Left ventricle myocardium superior (tissue), 1 donor: ENCODE measurements at regions of chr12 and their contacts with region 1.

Region 1: GRCh38 chr12:52879394-52880351 is 25.2 kb downstream of the KRT8 start:
- DNase-seq: peak; percentile 84
- ATAC-seq: peak; percentile 89

Region 2: GRCh38 chr12:52372216-52373154 is 507.2 kb before region 1 on chr12:
- intact Hi-C with region 1: loop called (anchors 10 kb)
- DNase-seq: peak; percentile 85
- ATAC-seq: peak; percentile 90

Region 3: GRCh38 chr12:52582971-52583456 is 296.7 kb before region 1 on chr12:
- intact Hi-C with region 1: loop called (anchors 5 kb)
- DNase-seq: peak; percentile 41
- ATAC-seq: peak; percentile 87

Region 4: GRCh38 chr12:53061404-53062010 is 181.8 kb after region 1 on chr12:
- intact Hi-C with region 1: no loop called
- DNase-seq: peak; percentile 44
- ATAC-seq: no peak